Cardiac septum (tissue), 1 donor: ENCODE measurements at regions of chr9 and their contacts with region 1.

Region 1: GRCh38 chr9:107439991-107440456 is 49.5 kb downstream of the KLF4 start:
- DNase-seq: no peak

Region 2: DNA sequence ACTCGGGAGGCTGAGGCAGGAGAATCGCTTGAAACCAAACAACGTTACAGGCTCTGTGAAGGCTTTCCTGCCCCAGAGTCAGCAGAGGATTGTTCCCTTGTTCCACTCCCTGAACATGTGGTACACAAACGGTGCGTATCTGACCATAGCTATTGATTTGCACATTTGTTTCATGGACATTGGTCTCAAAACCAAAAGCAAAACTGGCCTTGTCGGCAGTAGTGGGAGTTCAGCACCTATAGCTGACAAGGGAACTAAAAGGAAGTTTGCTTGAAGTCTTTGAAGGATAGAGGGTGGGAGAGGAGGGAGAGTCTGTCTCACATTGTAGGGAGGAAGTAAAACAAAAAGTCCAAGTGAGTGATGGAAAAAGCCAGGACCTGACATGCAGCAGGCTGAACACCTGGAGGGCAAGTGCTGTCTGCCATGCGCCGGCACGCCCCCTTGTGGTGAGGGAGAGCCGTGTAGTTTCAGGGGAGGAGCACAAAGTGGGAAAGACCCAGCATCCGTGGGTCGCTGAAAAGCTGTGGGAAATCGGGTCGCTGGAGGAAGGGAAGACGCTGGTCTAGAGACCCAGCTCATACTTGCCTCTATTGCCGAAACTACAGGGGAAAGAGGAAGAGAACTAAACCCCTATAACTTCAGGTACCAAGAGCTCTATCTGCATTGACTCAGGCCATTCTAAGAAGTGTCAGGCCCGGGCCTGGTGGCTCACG is 98.9 kb before region 1 on chr9:
- intact Hi-C with region 1: no loop called
- DNase-seq: peak; percentile 90

Region 3: GRCh38 chr9:107389617-107390071 is 50.4 kb before region 1 on chr9:
- intact Hi-C with region 1: loop called (anchors 10 kb)
- DNase-seq: no peak

Region 4: GRCh38 chr9:107472581-107473340 is 32.7 kb after region 1 on chr9:
- intact Hi-C with region 1: no loop called
- DNase-seq: no peak

Region 5: GRCh38 chr9:107491081-107492057 is 51.3 kb after region 1 on chr9:
- intact Hi-C with region 1: no loop called
- DNase-seq: no peak